ENCODE measurements at regions of chr12 and their contacts with region 1.

Region 1: GRCh38 chr12:121793838-121794533 is 498 bp upstream of the RHOF start:
- DNase-seq: peak; percentile 72 to 96
- H3K4me3 ChIP-seq: peak overlapping the region; percentile 57 to 67
- H3K27ac ChIP-seq: peak overlapping the region; percentile 100
- H3K4me1 ChIP-seq: peaks cover 30 to 42% of the 10 kb centered on the region in 2 donors
- H3K27me3 ChIP-seq: no peaks in the 10 kb centered on the region
- CTCF ChIP-seq: peak; percentile 100

Region 2: DNA sequence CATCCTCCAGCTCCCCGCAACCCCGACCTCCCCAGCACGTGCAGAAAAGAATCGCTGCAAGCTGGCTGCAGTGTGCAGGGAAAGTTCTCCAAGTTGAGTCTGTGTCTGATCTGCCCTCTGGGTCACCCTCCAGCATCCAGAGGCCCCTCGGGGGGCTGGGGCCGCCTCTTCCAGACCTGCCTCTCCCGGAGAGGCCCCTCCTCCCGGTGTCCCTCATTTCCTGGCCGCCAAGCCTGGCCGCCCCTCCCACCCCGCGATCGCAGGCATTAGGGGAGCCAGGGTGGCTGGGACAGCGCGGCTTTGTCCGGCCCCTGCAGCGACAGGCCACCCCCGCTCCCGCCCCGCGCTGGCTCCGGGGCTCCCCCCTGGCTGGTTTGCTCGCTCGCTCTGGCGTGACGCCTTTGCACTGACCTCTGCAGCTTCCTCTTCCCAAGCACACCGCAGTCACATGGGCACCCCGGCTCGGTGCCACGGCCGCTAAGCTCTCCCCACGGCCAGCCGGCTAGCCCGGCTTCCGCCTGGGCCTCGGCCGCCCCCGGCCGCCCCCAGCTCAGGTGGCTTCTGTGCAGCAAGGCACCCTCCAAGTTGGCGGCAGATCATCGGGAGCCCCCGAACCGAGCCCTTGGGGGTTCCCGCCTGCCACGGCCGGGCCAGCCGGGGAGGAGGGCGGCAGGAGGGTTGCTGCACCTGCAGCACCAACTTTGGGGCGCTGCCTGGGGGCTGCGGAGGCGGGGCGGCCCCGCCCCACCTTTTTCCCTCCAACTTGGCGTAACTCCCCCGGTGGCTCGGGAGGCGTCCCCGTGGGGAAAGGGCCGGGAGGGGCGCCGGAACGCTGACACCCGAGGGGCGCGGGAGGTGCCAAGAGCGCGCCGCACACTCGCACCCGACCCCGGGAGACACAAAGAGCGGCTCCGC is 256.8 kb before region 1 on chr12:
- intact Hi-C with region 1: loop called (anchors 5 kb)
- DNase-seq: peak; percentile 57 to 89
- H3K4me3 ChIP-seq: peak overlapping the region; percentile 72 to 82
- H3K27ac ChIP-seq: peak overlapping the region; percentile 77 to 85
- H3K4me1 ChIP-seq: peaks cover 8 to 12% of the 10 kb centered on the region in 2 donors
- H3K27me3 ChIP-seq: no peaks in the 10 kb centered on the region
- CTCF ChIP-seq: no peak

Region 3: GRCh38 chr12:121626087-121626852 is 167.7 kb before region 1 on chr12 and contains the start of gene ORAI1:
- intact Hi-C with region 1: no loop called
- DNase-seq: peak; percentile 80 to 98
- H3K4me3 ChIP-seq: peak within 1 kb of the TSS; percentile 77 to 81
- H3K27ac ChIP-seq: peak within 1 kb of the TSS; percentile 82 to 88
- H3K4me1 ChIP-seq: peaks cover 0 to 14% of the 10 kb centered on the region in 2 donors
- H3K27me3 ChIP-seq: no peaks in the 10 kb centered on the region
- CTCF ChIP-seq: peak in 1 of 3 experiments; percentile 72
- total RNA-seq, gene ORAI1: 24.6 TPM

Region 4: GRCh38 chr12:121773011-121773777 is 20.8 kb before region 1 on chr12:
- intact Hi-C with region 1: loop called (anchors 1 kb)
- DNase-seq: peak in 1 of 2 donors; percentile 72
- H3K4me3 ChIP-seq: peak overlapping the region in 1 of 2 donors; percentile 0
- H3K27ac ChIP-seq: no peak overlapping the region
- H3K4me1 ChIP-seq: peaks cover 2 to 9% of the 10 kb centered on the region in 2 donors
- H3K27me3 ChIP-seq: no peaks in the 10 kb centered on the region
- CTCF ChIP-seq: peak; percentile 79 to 86 (median 80)

Region 5: DNA sequence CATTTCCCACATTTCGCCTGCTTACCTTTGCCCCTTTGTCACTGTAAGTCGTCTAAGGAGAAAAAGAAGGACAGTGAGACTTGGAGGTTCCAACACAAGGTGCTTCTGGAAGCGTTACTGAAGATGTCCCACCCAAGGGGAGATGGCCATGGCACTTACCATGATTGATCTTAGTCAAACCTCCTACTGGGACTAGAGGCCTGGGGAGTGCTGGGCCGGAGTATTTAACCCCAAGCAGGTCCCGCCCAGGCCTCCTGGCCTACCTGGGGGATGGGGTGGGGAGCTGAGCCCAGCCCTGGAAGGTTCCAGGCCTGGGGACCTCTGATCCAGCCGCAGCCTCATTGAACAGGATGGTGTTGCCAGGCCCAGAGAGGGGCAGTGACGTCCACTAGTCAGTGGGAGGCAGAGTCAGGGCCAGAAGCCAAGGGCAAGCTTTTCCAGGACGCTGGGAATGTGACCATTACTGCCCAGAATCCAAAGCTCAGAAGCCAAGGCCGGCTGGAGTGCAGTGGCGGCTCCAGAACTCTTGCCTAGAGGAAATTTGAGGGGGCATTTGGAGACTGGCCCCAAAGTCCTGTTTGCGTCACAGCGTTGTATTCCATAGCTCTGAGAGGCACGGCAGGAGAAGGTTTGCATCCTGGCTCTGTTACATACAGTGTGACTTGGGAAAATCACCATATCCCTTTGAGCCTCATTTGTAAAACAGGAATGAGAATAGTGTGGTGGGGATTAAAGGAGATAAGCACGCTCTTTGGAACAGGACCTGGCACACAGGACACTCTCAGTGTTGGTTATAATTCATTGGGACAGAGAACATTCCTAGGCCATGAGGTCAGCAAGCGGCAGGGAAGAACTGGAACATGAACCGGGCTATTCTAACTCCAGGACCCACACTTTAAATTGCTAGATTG is 64.9 kb after region 1 on chr12 and contains the start of gene HPD:
- intact Hi-C with region 1: loop called (anchors 2 kb)
- DNase-seq: peak; percentile 33 to 90
- H3K4me3 ChIP-seq: peak within 1 kb of the TSS; percentile 10 to 16
- H3K27ac ChIP-seq: peak within 1 kb of the TSS; percentile 97
- H3K4me1 ChIP-seq: peaks cover 18 to 33% of the 10 kb centered on the region in 2 donors
- H3K27me3 ChIP-seq: no peaks in the 10 kb centered on the region
- CTCF ChIP-seq: no peak
- total RNA-seq, gene HPD: 0.96 TPM

Region 6: GRCh38 chr12:121917979-121918678 is 124.1 kb after region 1 on chr12 and contains the start of gene CFAP251:
- intact Hi-C with region 1: no loop called
- DNase-seq: peak; percentile 95 to 99
- H3K4me3 ChIP-seq: peak within 1 kb of the TSS; percentile 50 to 79
- H3K27ac ChIP-seq: peak within 1 kb of the TSS; percentile 70 to 76
- H3K4me1 ChIP-seq: peaks cover 3 to 20% of the 10 kb centered on the region in 2 donors
- H3K27me3 ChIP-seq: no peaks in the 10 kb centered on the region
- CTCF ChIP-seq: peak; percentile 85 to 94 (median 94)
- total RNA-seq, gene CFAP251: 0.75 TPM

Region 7: GRCh38 chr12:122225683-122226407 is 431.9 kb after region 1 on chr12 and contains the start of gene DIABLO:
- intact Hi-C with region 1: loop called (anchors 10 kb)
- DNase-seq: peak; percentile 99 to 100
- H3K4me3 ChIP-seq: peak within 1 kb of the TSS; percentile 63 to 82
- H3K27ac ChIP-seq: peak within 1 kb of the TSS; percentile 91
- H3K4me1 ChIP-seq: peaks cover 10 to 17% of the 10 kb centered on the region in 2 donors
- H3K27me3 ChIP-seq: no peaks in the 10 kb centered on the region
- CTCF ChIP-seq: peak in 1 of 3 experiments; percentile 5
- total RNA-seq, gene DIABLO: 54.8 TPM

Measured in ascending aorta (tissue), 2 donors.